Activated B cell treated with CpG ODN at 0.5 μM for 24 hours (primary cell): ENCODE measurements at regions of chr18 and their contacts with region 1.

Region 1: DNA sequence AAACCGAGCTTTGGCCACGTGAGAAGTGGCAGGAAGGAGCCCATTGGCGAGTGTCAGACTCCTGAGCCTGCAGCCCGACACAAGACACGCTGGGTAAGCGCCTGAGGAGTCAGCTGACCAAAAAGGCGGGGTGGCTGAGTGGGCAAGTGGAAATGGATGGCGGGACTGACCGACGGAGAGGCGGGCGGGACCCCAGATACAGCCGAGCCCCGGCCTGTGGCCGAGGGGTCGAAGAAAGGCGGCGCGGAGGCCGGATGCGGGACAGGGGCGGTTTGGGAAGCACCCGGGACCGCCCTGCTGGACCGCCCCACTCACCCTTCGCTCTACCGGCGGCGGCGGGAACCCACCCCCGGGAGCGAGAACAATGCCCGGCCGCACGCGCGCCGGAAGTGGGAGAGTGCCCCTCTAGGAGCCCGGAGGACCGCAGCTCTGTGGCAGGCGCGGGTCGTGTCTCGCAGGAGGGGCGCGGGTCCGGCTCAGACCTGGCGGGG is 22.8 kb downstream of the ZSCAN30 start:
- DNase-seq: peak; percentile 72
- ATAC-seq: peak; percentile 89
- H3K4me3 Mint-ChIP-seq: peak overlapping the region; percentile 94
- H3K27ac Mint-ChIP-seq: peak overlapping the region; percentile 93
- H3K4me1 Mint-ChIP-seq: peaks cover 26% of the 10 kb centered on the region
- H3K27me3 Mint-ChIP-seq: no peaks in the 10 kb centered on the region
- CTCF ChIP-seq: no peak

Region 2: GRCh38 chr18:35127201-35127600 is 140.0 kb before region 1 on chr18:
- CTCF ChIA-PET with region 1: no interaction called
- POLR2A ChIA-PET with region 1: no interaction called
- intact Hi-C with region 1: no loop called
- DNase-seq: no peak
- ATAC-seq: no peak
- H3K4me3 Mint-ChIP-seq: no peak overlapping the region
- H3K27ac Mint-ChIP-seq: no peak overlapping the region
- H3K4me1 Mint-ChIP-seq: peaks cover 20% of the 10 kb centered on the region
- H3K27me3 Mint-ChIP-seq: no peaks in the 10 kb centered on the region
- CTCF ChIP-seq: no peak

Region 3: GRCh38 chr18:35247444-35248249 is 19.6 kb before region 1 on chr18:
- CTCF ChIA-PET with region 1: interaction called, 6 read pairs
- POLR2A ChIA-PET with region 1: interaction called, 19 read pairs
- intact Hi-C with region 1: loop called (anchors 1 kb)
- DNase-seq: no peak
- ATAC-seq: peak; percentile 94
- H3K4me3 Mint-ChIP-seq: peak overlapping the region; percentile 60
- H3K27ac Mint-ChIP-seq: peak overlapping the region; percentile 90
- H3K4me1 Mint-ChIP-seq: peaks cover 43% of the 10 kb centered on the region
- H3K27me3 Mint-ChIP-seq: no peaks in the 10 kb centered on the region
- CTCF ChIP-seq: no peak

Region 4: GRCh38 chr18:35290073-35290735 is 23.0 kb after region 1 on chr18 and contains the start of gene ZSCAN30:
- CTCF ChIA-PET with region 1: no interaction called
- POLR2A ChIA-PET with region 1: interaction called, 94 read pairs
- intact Hi-C with region 1: loop called (anchors 1 kb)
- DNase-seq: peak; percentile 92
- ATAC-seq: peak; percentile 97
- H3K4me3 Mint-ChIP-seq: peak within 1 kb of the TSS; percentile 100
- H3K27ac Mint-ChIP-seq: peak within 1 kb of the TSS; percentile 99
- H3K4me1 Mint-ChIP-seq: peaks cover 51% of the 10 kb centered on the region
- H3K27me3 Mint-ChIP-seq: peaks cover 2% of the 10 kb centered on the region
- CTCF ChIP-seq: no peak
- total RNA-seq, gene ZSCAN30: 21.2 and 23.8 TPM in 2 replicates

Region 5: GRCh38 chr18:35747894-35748472 is 480.8 kb after region 1 on chr18:
- CTCF ChIA-PET with region 1: no interaction called
- POLR2A ChIA-PET with region 1: no interaction called
- intact Hi-C with region 1: no loop called
- DNase-seq: no peak
- ATAC-seq: peak; percentile 31
- H3K4me3 Mint-ChIP-seq: no peak overlapping the region
- H3K27ac Mint-ChIP-seq: no peak overlapping the region
- H3K4me1 Mint-ChIP-seq: peaks cover 3% of the 10 kb centered on the region
- H3K27me3 Mint-ChIP-seq: peaks cover 3% of the 10 kb centered on the region
- CTCF ChIP-seq: no peak